ENCODE measurements at regions of chr1 and their contacts with region 1.

Region 1: DNA sequence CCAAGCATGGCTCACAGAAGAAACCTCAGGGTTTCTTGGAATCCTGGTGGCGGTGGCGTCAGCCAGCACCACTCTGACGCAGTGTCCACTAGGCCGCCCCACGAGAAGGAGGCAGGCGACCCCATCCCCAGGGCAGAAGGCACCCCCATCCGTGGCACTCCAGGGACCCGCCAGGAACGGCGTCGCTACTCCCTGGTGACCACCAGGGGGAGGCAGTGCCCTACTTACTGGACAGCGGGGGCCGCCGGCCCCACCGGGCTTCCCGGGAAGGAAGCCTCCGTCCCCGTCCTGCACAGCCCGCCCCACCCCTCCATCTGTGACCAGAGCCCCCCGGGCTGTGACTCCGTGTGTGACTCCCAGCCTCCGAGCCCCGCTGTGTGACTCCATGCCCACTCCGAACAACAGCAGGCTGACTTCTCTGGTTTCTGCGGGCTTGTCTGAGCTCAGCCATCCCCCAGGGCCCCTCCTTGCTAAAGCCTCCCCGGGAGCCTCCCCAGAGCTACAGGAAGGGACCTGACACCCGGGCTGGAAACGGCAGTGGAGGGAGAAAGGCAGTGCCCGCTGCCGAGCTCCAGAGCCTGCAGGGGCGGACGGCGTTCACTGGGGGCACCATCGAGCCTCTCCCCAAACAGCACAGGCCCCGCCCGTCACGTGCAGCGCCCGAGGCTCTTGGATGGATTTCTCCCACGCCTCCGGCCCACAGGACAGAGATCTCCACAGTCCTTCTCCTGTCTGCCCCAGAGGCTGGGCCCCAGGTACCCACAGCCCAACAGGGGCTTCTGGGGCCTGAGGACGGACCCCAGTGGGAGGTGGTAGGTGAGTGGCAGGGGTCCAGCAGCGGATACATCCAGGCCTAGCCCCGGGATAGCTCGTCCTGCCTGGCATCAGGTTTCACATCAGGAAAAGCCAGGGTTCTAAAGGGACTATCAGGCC is 21.1 kb downstream of the KIF17 start:
- DNase-seq: peak; percentile 81
- H3K4me3 Mint-ChIP-seq: peak overlapping the region; percentile 81
- H3K27ac Mint-ChIP-seq: peak overlapping the region; percentile 42
- H3K4me1 Mint-ChIP-seq: peaks cover 7% of the 10 kb centered on the region
- H3K27me3 Mint-ChIP-seq: peaks cover 65% of the 10 kb centered on the region

Region 2: GRCh38 chr1:21189906-21190500 is 493.3 kb after region 1 on chr1:
- CTCF ChIA-PET with region 1: interaction called, 51 read pairs
- DNase-seq: no peak
- H3K4me3 Mint-ChIP-seq: no peak overlapping the region
- H3K27ac Mint-ChIP-seq: no peak overlapping the region
- H3K4me1 Mint-ChIP-seq: peaks cover 6% of the 10 kb centered on the region
- H3K27me3 Mint-ChIP-seq: peaks cover 60% of the 10 kb centered on the region